ENCODE measurements at regions of chr20 and their contacts with region 1.

Region 1: DNA sequence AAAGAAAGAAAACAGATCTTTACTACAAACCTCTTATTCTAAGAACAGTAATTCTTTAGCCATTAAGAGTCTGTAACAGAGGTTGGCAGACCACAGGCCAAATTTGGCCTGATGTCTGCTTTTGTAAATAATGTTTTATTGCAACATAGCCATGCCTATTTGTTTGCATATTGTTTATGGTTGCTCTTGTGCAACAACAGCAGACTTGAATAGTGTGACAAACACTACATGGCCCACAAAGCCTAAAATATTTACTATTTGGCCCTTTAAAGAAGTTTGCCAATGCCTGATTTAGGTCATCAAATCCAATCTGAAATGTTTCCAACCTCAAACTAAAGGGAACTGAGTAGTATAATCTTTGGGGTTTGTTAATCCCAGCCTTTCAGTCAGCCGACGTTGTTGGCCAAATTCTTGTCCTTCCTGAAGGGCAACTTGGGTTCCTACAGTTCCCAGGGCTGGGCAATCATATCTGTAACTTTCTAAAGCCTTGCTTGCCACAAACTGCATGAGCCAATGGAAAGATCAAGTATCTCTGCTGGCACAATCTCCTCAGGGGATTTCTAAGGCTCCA is 33.9 kb upstream of the TBC1D20 start:
- DNase-seq: no peak
- H3K4me3 ChIP-seq: no peak overlapping the region
- H3K27ac ChIP-seq: no peak overlapping the region
- H3K4me1 ChIP-seq: no peaks in the 10 kb centered on the region
- H3K27me3 ChIP-seq: no peaks in the 10 kb centered on the region
- CTCF ChIP-seq: no peak

Region 2: GRCh38 chr20:539848-540247 is 43.6 kb after region 1 on chr20:
- CTCF ChIA-PET with region 1: no interaction called
- POLR2A ChIA-PET with region 1: interaction called, 13 read pairs
- intact Hi-C with region 1: no loop called
- DNase-seq: no peak
- H3K4me3 ChIP-seq: no peak overlapping the region
- H3K27ac ChIP-seq: no peak overlapping the region
- H3K4me1 ChIP-seq: peaks cover 15% of the 10 kb centered on the region
- H3K27me3 ChIP-seq: no peaks in the 10 kb centered on the region
- CTCF ChIP-seq: no peak